ENCODE measurements at regions of chr4 and their contacts with region 1.

Region 1: DNA sequence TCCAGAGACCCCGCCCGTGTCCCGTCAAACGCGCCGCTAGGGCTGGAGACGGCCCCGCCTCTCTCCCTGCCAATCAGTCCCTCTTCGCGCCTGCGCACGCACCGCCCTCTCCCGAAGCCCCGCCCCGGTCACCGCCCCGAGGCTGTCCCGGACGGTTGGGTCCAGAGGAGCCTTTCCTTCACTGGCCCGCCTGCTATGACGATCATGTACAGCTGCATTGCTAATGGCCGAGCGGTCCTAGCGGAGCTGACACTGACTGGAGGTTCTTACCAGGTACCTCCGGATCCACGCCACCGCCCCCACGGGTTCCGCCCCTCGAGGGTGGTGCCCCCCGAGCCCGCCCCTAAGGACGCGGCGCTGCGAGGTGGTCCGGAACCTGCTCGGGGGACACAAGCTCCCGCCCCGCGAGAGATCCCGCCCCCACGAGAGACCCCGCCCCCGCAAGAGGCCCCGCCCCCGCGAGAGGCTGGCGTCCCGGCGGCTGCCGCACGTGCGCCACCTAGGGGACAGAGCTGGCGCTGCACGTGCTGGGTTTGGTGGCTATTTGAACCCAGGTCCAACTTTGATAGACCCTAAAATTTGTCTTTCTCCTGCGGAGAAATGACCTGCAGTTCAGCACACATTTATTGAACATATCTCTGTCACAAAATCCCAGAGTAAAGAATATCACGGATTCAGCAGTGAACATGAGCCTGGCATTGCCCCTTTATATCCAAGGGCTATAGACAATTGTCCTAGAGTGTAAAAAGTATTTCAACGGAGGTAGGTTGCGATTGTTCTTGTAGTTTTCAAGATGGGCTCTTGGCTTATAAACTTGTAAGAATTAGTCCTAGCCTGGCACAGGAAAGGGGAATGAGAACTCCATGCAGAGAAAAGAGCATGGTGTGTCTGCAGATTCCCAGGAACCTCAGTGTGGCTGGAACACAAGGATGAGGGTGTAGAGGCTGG is 88.7 kb downstream of the HNRNPD start:
- DNase-seq: peak; percentile 98 to 100 (median 99)
- H3K4me3 ChIP-seq: peak overlapping the region; percentile 62
- H3K4me3 Mint-ChIP-seq: peak overlapping the region; percentile 48 to 93 (median 86)
- H3K27ac ChIP-seq: peak overlapping the region; percentile 38
- H3K27ac Mint-ChIP-seq: peak overlapping the region; percentile 2 to 89 (median 66)
- H3K4me1 ChIP-seq: peaks cover 5% of the 10 kb centered on the region
- H3K4me1 Mint-ChIP-seq: peaks cover 13 to 17% (median 14%) of the 10 kb centered on the region in 3 donors
- H3K27me3 ChIP-seq: no peaks in the 10 kb centered on the region
- H3K27me3 Mint-ChIP-seq: no peaks in the 10 kb centered on the region

Region 2: GRCh38 chr4:82360298-82361177 is 75.4 kb after region 1 on chr4:
- CTCF ChIA-PET with region 1: interaction called, 13 read pairs
- POLR2A ChIA-PET with region 1: no interaction called
- DNase-seq: peak in 2 of 5 donors; percentile 26 to 27
- H3K4me3 ChIP-seq: no peak overlapping the region
- H3K4me3 Mint-ChIP-seq: peak overlapping the region in 2 of 7 donors; percentile 24 to 28
- H3K27ac ChIP-seq: no peak overlapping the region
- H3K27ac Mint-ChIP-seq: peak overlapping the region; percentile 28 to 91 (median 50)
- H3K4me1 ChIP-seq: peaks cover 95% of the 10 kb centered on the region
- H3K4me1 Mint-ChIP-seq: peaks cover 85 to 98% (median 97%) of the 10 kb centered on the region in 3 donors
- H3K27me3 ChIP-seq: no peaks in the 10 kb centered on the region
- H3K27me3 Mint-ChIP-seq: peaks cover 0 to 1% of the 10 kb centered on the region in 2 donors